Posterior vena cava (tissue), 2 donors: ENCODE measurements at regions of chr17 and their contacts with region 1.

Region 1: DNA sequence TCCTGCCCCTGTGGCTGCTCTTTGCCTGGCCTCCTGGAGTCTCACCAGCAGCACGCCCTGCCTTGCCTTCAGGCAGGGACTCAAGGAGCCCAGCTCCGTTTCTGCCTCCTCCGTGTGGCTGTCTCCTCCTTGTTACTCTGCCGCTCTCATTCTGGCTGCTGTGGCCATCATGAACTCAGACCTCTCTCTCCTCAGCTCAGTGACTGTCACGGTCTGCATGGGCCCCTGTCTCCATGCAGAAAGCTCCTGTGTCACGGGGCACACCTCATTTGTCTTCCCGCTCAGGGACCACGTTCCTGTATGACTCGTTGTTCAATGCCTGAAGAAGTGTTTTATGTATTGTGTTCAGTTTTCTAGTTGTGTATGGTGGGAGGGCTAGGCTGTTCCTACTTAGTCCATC is 25.3 kb downstream of the RPTOR start:
- DNase-seq: no peak

Region 2: DNA sequence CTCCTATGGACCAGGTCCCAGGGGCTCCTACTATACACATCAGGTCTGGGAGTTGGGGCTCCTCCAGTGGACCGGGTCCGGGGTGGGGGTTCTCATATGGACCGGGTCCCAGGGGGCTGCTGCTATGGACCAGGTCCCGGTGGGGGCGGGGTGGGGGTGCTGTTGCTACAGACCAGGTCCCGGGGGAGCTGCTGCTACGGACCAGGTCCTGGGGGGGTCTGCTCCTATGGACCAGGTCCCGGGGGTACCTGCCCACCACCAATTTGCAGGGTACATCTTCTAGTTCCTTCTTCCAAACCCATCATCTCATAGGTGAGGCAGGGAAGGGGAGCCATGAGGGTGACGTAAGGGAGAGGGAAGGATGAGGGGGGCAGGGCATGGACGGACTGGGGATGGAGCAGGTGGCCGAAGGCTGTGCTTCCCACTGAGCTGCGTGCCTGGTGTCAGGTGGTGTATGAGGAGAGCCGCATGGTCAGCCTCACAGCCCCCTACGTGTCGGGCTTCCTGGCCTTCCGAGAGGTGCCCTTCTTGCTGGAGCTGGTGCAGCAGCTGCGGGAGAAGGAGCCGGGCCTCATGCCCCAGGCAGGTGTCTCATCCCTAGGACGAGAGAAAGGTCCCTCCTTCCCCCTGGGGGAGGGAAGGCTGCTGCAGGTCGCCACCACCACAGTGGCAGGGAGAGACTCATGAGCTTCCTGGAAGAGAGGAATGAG is 148.4 kb before region 1 on chr17:
- intact Hi-C with region 1: no loop called
- DNase-seq: peak; percentile 76

Region 3: GRCh38 chr17:80544655-80545498 is 25.0 kb before region 1 on chr17 and contains the start of gene RPTOR:
- intact Hi-C with region 1: loop called in 1 of 2 experiments (anchors 1 kb)
- DNase-seq: peak; percentile 97
- total RNA-seq, gene RPTOR: 30.1 to 44.1 TPM